PC-9 (cell line): ENCODE measurements at regions of chr4 and their contacts with region 1.

Region 1: GRCh38 chr4:154551872-154552686 is 1.9 kb upstream of the PLRG1 start:
- DNase-seq: peak; percentile 68 to 75
- H3K4me3 ChIP-seq: no peak overlapping the region
- H3K27ac ChIP-seq: no peak overlapping the region
- H3K4me1 ChIP-seq: peaks cover 11% of the 10 kb centered on the region
- H3K27me3 ChIP-seq: no peaks in the 10 kb centered on the region
- CTCF ChIP-seq: peak; percentile 77

Region 2: GRCh38 chr4:154399259-154399974 is 152.7 kb before region 1 on chr4:
- CTCF ChIA-PET with region 1: no interaction called
- POLR2A ChIA-PET with region 1: no interaction called
- intact Hi-C with region 1: loop called (anchors 5 kb)
- DNase-seq: peak in 1 of 2 experiments; percentile 2
- H3K4me3 ChIP-seq: no peak overlapping the region
- H3K27ac ChIP-seq: no peak overlapping the region
- H3K4me1 ChIP-seq: no peaks in the 10 kb centered on the region
- H3K27me3 ChIP-seq: no peaks in the 10 kb centered on the region
- CTCF ChIP-seq: peak; percentile 38; the same call in 1 of the 2 replicates

Region 3: GRCh38 chr4:154610582-154610981 is 58.5 kb after region 1 on chr4:
- CTCF ChIA-PET with region 1: interaction called, 3 read pairs
- POLR2A ChIA-PET with region 1: interaction called, 13 read pairs
- intact Hi-C with region 1: no loop called
- DNase-seq: no peak
- H3K4me3 ChIP-seq: no peak overlapping the region
- H3K27ac ChIP-seq: no peak overlapping the region
- H3K4me1 ChIP-seq: no peaks in the 10 kb centered on the region
- H3K27me3 ChIP-seq: no peaks in the 10 kb centered on the region
- CTCF ChIP-seq: no peak

Region 4: DNA sequence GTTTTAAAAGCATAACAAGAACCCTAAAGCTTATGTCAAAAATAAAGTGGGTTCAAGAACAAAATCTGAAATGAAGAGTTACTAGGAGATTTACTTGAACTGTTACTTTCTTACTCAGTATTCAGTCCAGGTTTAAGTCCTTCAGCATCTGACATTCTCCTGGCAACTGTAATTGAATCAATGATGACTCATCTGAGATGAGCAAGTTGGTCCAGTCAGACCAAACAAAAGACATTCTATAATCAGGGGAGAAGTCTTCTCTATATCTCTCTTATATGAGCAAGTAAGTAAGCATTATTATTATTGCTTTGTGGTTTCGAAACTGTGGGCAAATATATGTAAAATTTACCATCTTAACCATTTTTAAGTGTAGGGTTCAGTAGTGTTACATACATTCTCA is 790.1 kb after region 1 on chr4:
- CTCF ChIA-PET with region 1: no interaction called
- POLR2A ChIA-PET with region 1: no interaction called
- intact Hi-C with region 1: loop called (anchors 5 kb)
- DNase-seq: no peak
- H3K4me3 ChIP-seq: no peak overlapping the region
- H3K27ac ChIP-seq: no peak overlapping the region
- H3K4me1 ChIP-seq: no peaks in the 10 kb centered on the region
- H3K27me3 ChIP-seq: no peaks in the 10 kb centered on the region
- CTCF ChIP-seq: no peak